Activated CD4-positive, alpha-beta memory T cell treated with anti-CD3 and anti-CD28 coated beads for 36 hours (primary cell): ENCODE measurements at regions of chr7 and their contacts with region 1.

Region 1: DNA sequence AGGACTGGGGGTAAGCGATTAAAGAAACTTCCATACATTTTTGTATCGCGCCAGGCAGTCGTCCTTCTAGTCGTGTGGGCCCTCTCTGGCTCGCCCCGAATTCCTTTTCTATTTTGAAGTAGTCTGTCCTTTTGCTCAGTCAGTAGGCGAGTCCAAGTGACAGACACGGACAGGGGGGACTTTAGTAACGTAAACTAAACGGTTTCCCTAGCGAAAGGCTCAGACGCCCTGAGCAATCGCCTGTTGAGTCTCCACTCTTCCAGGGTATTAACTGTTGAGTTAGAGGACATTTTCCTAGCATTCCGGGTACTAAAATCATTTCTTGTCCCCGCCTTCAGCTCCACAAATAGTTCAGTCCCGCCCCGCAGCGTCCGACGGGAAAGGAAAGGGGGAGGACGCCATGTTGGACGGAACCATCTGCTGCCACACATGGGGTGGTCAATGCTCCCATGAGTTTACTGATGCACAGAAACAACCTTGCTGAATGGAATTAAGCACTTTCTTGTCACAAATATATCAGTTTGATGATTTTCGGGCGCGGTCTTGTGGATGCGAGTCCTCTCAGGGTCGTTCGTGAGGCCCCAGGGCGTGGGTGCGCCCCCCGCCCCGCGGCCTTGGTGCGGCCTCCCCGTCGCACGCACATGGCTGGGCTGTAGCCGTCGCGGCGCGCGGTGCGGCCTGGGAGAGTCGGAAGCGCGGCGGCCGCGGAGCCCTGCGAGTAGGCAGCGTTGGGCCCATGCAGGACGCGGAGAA is at the start of gene EIF3B:
- DNase-seq: peak; percentile 91
- H3K4me3 Mint-ChIP-seq: peak within 1 kb of the TSS; percentile 80
- H3K27ac Mint-ChIP-seq: peak within 1 kb of the TSS; percentile 100
- H3K4me1 Mint-ChIP-seq: peaks cover 29% of the 10 kb centered on the region
- H3K27me3 Mint-ChIP-seq: no peaks in the 10 kb centered on the region
- total RNA-seq, gene EIF3B: 179 to 182 TPM

Region 2: DNA sequence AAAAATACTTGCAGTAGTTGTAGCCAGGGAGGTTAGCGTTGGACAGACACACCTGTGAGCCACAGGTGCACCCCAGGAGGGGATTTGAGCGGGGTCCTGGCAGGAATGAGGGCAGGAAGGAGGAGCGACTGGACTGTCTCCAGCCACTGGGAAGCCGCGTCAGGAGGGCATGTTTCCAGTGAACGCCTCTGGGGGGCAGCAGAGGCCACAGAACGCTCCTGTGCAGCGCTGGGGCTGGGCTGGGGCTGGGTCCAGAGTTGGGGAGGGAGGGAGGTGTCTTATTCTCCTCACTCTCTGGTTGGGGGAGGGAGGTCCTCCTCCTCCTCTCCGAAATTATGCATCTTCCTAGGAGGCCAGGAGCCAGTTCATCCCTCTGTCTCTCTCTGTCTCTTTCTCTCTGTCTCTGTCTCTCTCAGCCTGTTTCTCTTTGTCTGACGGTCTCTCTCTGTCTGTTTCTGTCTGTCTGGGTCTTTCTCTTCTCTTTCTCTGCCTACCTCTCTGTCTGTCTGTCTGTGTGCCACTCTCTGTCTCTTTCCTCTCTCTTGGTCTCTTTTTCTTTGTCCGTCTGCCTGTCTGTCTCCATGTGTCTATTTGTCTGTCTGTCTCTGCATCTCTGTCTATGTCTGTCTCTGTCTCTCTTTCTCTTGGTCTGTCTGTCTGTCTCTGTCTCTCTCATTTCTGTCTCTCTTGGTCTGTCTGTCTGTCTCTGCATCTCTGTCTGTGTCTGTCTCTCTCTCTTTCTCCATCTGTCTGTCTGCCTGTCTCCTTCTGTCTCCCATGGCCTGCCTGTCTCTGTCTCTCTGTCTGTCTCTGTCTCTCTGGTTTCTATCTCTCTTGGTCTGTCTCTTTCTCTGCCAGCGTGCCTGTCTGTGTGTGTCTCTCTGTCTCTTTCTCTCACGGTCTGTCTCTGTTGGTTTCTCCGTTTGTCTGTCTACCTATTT is 774.6 kb before region 1 on chr7:
- CTCF ChIA-PET with region 1: interaction called, 3 read pairs
- POLR2A ChIA-PET with region 1: no interaction called
- intact Hi-C with region 1: loop called (anchors 2 kb)
- DNase-seq: peak; percentile 80
- H3K4me3 Mint-ChIP-seq: no peak overlapping the region
- H3K27ac Mint-ChIP-seq: no peak overlapping the region
- H3K4me1 Mint-ChIP-seq: peaks cover 7% of the 10 kb centered on the region
- H3K27me3 Mint-ChIP-seq: no peaks in the 10 kb centered on the region

Region 3: DNA sequence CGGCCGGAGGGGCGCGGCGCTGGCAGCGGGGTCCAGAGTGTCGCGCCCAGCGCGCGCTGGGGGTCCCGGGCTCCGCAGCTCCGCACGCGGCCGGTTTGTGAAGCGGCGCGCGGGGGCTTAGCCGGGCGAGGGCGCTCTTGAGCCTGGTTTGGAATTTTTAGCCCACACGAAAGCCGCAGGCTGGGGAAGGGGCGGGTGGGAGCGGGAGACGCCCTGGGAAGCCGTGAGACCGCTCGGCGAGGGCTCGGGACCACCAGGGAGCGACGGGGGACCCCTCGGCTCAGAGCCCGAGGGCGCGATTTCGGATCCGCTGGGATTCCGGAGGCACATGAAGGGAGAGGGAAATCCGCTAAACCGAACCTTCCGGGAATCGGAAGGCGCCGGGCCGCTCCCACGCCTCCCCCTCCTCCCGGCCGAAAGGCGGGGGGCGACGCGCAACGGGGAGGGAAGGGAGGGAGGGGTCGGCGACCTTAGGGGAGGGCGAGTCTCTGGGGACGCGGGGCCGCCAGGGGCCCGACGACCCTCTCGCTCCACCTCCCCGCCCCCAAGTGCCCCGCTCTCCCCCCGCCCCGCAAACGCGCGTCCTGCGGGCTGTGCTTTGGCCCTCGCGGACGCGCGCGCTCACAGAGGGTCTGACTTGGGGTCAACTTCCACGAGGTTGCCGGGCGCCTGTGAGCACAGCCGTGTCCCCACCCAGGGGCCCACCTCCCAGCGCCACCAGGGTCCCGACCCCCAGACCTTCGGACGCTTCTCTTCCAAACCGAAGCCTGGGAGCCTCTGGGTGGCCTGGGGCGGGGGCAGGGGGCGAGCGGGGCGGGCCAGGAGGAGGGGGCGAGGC is 689.4 kb before region 1 on chr7:
- CTCF ChIA-PET with region 1: no interaction called
- POLR2A ChIA-PET with region 1: no interaction called
- intact Hi-C with region 1: loop called (anchors 10 kb)
- DNase-seq: peak; percentile 66
- H3K4me3 Mint-ChIP-seq: no peak overlapping the region
- H3K27ac Mint-ChIP-seq: no peak overlapping the region
- H3K4me1 Mint-ChIP-seq: peaks cover 5% of the 10 kb centered on the region
- H3K27me3 Mint-ChIP-seq: peaks cover 42% of the 10 kb centered on the region

Region 4: DNA sequence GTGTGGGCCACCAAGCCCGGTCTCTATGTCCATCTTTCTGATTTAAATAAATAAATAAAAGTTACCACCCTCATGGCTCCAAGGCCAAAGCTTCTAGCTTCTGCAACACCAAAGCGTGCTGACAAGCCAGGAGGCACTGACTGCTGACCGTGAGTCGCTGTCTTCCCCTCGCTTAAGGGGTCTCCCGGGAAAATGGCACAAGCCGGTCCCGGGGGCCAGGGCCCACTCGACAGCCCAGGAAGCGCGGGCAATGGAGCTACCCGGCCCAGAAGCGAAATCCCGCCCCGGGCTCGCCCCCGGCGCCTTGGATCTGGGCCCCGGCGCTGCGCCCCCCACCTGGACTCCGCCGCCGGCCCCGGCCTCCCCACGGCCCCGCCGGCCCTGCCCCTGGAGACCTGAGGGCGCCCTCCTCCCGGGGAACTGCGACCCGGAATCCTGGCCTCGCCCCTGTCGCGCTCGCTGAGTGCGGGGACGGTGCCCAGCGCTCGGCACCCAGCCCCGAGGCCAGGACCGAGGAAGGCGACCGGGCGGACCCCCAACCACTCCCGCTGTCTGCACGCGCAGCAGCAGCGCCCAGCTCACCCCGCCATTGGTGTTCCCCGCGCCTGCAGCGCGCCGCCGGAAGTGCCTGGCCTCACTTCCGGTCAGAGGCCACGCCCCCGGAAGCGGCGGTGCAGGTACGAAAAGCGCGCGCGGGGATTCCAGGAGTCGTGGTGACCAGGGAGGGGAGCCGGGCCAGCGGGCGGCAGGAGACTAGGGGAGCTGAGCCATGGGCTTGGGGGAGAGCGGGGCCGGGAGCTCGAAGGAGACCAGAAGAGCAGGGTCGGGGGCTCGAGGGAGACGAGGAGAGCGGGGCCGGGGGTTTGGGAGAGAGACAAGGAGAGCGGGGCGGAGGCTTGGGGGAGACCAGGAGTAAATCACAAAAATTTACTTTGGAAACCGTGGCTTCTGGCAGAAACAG is 112.5 kb before region 1 on chr7 and contains the starts of genes MRM2 and NUDT1:
- CTCF ChIA-PET with region 1: interaction called, 6 read pairs
- POLR2A ChIA-PET with region 1: interaction called, 3 read pairs
- intact Hi-C with region 1: loop called (anchors 2 kb)
- DNase-seq: peak; percentile 82
- H3K4me3 Mint-ChIP-seq: peak within 1 kb of the TSS; percentile 91
- H3K27ac Mint-ChIP-seq: peak within 1 kb of the TSS; percentile 88
- H3K4me1 Mint-ChIP-seq: peaks cover 20% of the 10 kb centered on the region
- H3K27me3 Mint-ChIP-seq: no peaks in the 10 kb centered on the region
- total RNA-seq, gene MRM2: 25.5 to 26.9 TPM
- total RNA-seq, gene NUDT1: 112 to 114 TPM

Region 5: DNA sequence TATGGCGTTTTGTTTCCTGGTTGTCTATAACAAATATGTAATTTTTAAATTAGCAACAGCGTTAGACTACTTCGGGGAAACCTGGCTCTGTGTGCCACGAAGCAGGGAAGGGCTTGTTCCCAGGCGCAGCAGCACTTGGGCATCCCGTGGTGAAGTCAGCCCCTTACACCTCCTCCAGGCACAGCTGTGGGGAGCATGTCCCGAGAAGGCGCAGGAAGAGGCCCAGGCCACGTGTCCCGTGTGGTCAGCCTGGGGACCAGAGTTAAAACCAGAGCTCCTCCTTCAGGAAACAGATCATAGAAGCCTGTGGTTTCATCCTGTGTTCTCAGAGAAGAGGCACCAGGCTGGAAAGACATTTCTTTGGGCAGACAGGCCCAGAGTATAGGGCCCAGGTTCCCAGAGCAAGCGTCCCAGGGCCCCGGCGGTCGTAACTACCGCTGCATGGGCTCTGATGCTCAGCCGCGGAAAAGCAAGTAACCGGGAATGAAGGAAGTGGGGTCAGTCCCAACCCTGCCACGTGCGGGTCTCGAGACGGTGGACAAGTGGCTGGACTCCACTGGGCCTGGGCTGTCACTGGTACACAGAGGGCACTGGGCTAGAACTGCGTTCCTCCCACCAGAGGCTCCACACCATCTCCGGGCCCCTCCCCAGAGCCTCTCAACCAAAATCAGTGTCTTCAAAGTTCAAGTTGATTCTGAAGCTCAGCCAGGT is 105.2 kb before region 1 on chr7:
- CTCF ChIA-PET with region 1: interaction called, 19 read pairs
- POLR2A ChIA-PET with region 1: interaction called, 3 read pairs
- intact Hi-C with region 1: no loop called
- DNase-seq: peak; percentile 32
- H3K4me3 Mint-ChIP-seq: no peak overlapping the region
- H3K27ac Mint-ChIP-seq: peak overlapping the region; percentile 60
- H3K4me1 Mint-ChIP-seq: peaks cover 14% of the 10 kb centered on the region
- H3K27me3 Mint-ChIP-seq: no peaks in the 10 kb centered on the region

Region 6: DNA sequence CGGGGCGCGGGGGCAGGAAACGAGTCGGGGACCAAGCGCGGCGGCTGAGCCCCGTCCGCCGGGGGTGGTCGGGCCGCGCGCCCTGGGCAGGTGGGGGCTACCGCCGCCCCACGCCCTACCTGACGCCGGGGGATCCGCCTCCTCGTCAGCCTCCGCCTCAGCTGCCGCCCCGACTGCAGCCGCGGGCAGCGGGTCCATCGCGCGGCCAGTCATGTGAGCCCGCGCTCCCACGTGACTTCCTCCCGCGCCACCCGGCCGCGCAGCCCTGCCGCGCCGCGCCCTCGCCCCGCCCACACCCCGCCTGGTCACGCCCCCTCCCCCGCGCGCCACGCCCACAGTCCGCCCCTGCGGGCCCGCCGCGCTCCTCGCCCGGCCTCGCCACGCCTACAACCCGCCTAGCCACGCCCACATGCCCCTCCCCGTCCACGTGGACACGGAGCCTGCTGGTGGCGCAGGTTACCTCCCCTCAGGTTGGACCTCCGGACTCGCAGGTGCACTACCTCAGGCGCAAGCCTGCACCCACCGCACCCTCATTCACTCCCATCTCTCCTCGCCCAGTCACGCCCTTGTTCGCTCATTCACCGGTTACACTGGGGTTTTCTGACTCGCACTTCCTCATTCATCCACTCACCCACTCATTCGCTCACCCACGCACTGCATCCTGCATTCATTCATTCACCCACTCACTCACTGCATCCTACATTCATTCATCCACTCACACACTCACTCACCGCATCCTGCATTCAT is 40.0 kb before region 1 on chr7 and contains the start of gene SNX8:
- CTCF ChIA-PET with region 1: no interaction called
- POLR2A ChIA-PET with region 1: interaction called, 4 read pairs
- intact Hi-C with region 1: loop called (anchors 1 kb)
- DNase-seq: peak; percentile 96
- H3K4me3 Mint-ChIP-seq: no peak within 1 kb of the TSS
- H3K27ac Mint-ChIP-seq: peak within 1 kb of the TSS; percentile 56
- H3K4me1 Mint-ChIP-seq: peaks cover 10% of the 10 kb centered on the region
- H3K27me3 Mint-ChIP-seq: no peaks in the 10 kb centered on the region
- total RNA-seq, gene SNX8: 35.4 to 40.2 TPM

Region 7: GRCh38 chr7:2403014-2403717 is 48.8 kb after region 1 on chr7 and contains the start of gene CHST12:
- CTCF ChIA-PET with region 1: interaction called, 3 read pairs
- POLR2A ChIA-PET with region 1: no interaction called
- intact Hi-C with region 1: loop called (anchors 5 kb)
- DNase-seq: peak; percentile 96
- H3K4me3 Mint-ChIP-seq: peak within 1 kb of the TSS; percentile 79
- H3K27ac Mint-ChIP-seq: no peak within 1 kb of the TSS
- H3K4me1 Mint-ChIP-seq: peaks cover 45% of the 10 kb centered on the region
- H3K27me3 Mint-ChIP-seq: no peaks in the 10 kb centered on the region
- total RNA-seq, gene CHST12: 3.7 to 3.9 TPM

Region 8: GRCh38 chr7:2824678-2825461 is 470.5 kb after region 1 on chr7:
- CTCF ChIA-PET with region 1: no interaction called
- POLR2A ChIA-PET with region 1: no interaction called
- intact Hi-C with region 1: no loop called
- DNase-seq: no peak
- H3K4me3 Mint-ChIP-seq: no peak overlapping the region
- H3K27ac Mint-ChIP-seq: no peak overlapping the region
- H3K4me1 Mint-ChIP-seq: peaks cover 32% of the 10 kb centered on the region
- H3K27me3 Mint-ChIP-seq: no peaks in the 10 kb centered on the region